Lower lobe of right lung (tissue), 2 donors: ENCODE measurements at regions of chr1 and their contacts with region 1.

Region 1: DNA sequence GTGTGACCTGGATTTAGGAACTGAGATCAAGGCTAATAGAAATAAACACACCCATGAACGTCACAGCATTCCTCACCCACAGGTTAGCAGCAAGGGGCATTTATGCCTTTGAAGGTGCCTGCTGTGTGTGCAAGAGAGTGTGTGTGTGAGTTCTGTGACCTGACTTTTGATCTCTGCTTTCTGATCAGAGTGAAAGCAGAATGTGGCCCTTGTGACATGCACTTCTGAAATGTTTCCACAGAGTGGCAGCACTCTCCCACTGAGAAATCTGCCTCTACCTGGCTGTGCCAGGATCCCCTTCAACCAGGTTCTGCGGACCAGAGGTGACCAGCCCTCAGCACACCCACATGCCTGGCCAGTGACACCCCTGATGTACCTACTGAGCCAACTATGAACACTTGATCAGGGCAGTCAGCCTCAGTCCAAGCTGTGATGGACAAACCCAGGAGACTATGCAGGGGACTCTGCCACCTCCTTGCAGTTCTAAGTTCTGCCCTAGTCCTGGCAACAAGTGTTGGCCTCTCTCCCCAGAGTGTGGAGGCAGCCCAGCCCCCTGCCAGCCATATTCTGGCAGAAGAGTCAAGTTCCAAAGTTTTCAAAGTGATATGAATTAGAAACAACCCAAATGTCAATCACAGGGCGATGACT is 41.0 kb downstream of the RXRG start:
- DNase-seq: peak; percentile 47
- ATAC-seq: peak; percentile 79
- H3K4me3 ChIP-seq: no peak overlapping the region
- H3K27ac ChIP-seq: no peak overlapping the region
- H3K4me1 ChIP-seq: no peaks in the 10 kb centered on the region
- H3K27me3 ChIP-seq: no peaks in the 10 kb centered on the region
- CTCF ChIP-seq: peak; percentile 63

Region 2: DNA sequence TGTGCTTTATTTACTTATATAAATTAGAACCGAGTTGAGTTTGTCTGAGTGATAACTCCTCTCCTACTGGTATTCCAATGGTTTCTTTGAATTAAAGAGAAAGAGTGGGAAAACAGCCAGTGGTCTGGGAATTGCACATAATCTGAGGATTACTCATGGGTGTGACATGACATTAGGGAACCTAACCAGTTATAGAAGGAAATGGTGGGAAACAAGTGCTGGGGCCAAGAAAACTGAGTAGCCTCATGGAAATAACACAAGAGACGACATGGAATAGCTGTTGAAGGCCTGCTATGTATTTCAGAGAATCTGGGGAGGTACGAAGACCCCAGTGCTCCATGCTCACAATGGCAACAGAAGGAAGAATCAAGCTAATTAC is 98.0 kb after region 1 on chr1:
- intact Hi-C with region 1: no loop called
- DNase-seq: no peak
- ATAC-seq: no peak
- H3K4me3 ChIP-seq: no peak overlapping the region
- H3K27ac ChIP-seq: no peak overlapping the region
- H3K4me1 ChIP-seq: no peaks in the 10 kb centered on the region
- H3K27me3 ChIP-seq: no peaks in the 10 kb centered on the region
- CTCF ChIP-seq: no peak

Region 3: GRCh38 chr1:165914136-165914798 is 510.3 kb after region 1 on chr1:
- intact Hi-C with region 1: loop called (anchors 10 kb)
- DNase-seq: no peak
- ATAC-seq: peak; percentile 71 to 84
- H3K4me3 ChIP-seq: no peak overlapping the region
- H3K27ac ChIP-seq: no peak overlapping the region
- H3K4me1 ChIP-seq: peaks cover 19% of the 10 kb centered on the region
- H3K27me3 ChIP-seq: no peaks in the 10 kb centered on the region
- CTCF ChIP-seq: peak; percentile 84